ENCODE measurements at regions of chr2 and their contacts with region 1.

Region 1: GRCh38 chr2:68121873-68122679 is 35.6 kb upstream of the PNO1 start:
- DNase-seq: peak; percentile 54 to 70 (median 60)
- H3K4me3 ChIP-seq: no peak overlapping the region
- H3K4me3 Mint-ChIP-seq: peak overlapping the region in 2 of 8 donors; percentile 56 to 63
- H3K27ac ChIP-seq: no peak overlapping the region
- H3K27ac Mint-ChIP-seq: no peak overlapping the region
- H3K4me1 ChIP-seq: peaks cover 5% of the 10 kb centered on the region
- H3K4me1 Mint-ChIP-seq: peaks cover 1 to 5% (median 5%) of the 10 kb centered on the region in 4 donors
- H3K27me3 ChIP-seq: no peaks in the 10 kb centered on the region
- H3K27me3 Mint-ChIP-seq: peaks cover 0 to 1% of the 10 kb centered on the region in 2 donors

Region 2: DNA sequence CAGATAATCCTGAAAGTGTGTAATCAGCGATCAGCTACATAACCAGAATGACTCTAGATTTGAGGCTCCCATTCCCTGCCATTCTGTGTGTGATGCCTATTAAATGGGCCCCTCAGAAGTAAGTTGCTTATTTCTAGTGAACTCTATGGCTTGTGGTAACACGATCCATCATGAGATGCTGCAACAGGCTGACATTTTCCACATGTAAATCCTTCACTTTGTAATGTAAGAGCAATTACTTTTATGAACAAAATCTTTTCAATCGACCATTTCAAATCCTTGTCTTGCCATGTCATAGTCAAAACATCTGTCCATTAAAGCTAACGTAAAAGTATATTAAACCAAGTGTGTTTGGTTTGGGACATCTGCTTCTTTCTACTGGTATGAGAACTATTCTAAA is 900.8 kb before region 1 on chr2:
- CTCF ChIA-PET with region 1: no interaction called
- POLR2A ChIA-PET with region 1: no interaction called
- intact Hi-C with region 1: no loop called
- DNase-seq: no peak
- H3K4me3 ChIP-seq: no peak overlapping the region
- H3K4me3 Mint-ChIP-seq: no peak overlapping the region
- H3K27ac ChIP-seq: no peak overlapping the region
- H3K27ac Mint-ChIP-seq: no peak overlapping the region
- H3K4me1 ChIP-seq: no peaks in the 10 kb centered on the region
- H3K4me1 Mint-ChIP-seq: no peaks in the 10 kb centered on the region
- H3K27me3 ChIP-seq: no peaks in the 10 kb centered on the region
- H3K27me3 Mint-ChIP-seq: no peaks in the 10 kb centered on the region

Region 3: GRCh38 chr2:68100189-68100588 is 21.9 kb before region 1 on chr2:
- CTCF ChIA-PET with region 1: no interaction called
- POLR2A ChIA-PET with region 1: no interaction called
- intact Hi-C with region 1: no loop called
- DNase-seq: no peak
- H3K4me3 ChIP-seq: no peak overlapping the region
- H3K4me3 Mint-ChIP-seq: no peak overlapping the region
- H3K27ac ChIP-seq: no peak overlapping the region
- H3K27ac Mint-ChIP-seq: no peak overlapping the region
- H3K4me1 ChIP-seq: no peaks in the 10 kb centered on the region
- H3K4me1 Mint-ChIP-seq: peaks cover 0 to 1% (median 0%) of the 10 kb centered on the region in 4 donors
- H3K27me3 ChIP-seq: no peaks in the 10 kb centered on the region
- H3K27me3 Mint-ChIP-seq: peaks cover 2 to 6% of the 10 kb centered on the region in 2 donors

Region 4: GRCh38 chr2:68134120-68134519 is 12.0 kb after region 1 on chr2:
- CTCF ChIA-PET with region 1: interaction called, 19 read pairs
- POLR2A ChIA-PET with region 1: no interaction called
- intact Hi-C with region 1: no loop called
- DNase-seq: no peak
- H3K4me3 ChIP-seq: no peak overlapping the region
- H3K4me3 Mint-ChIP-seq: no peak overlapping the region
- H3K27ac ChIP-seq: no peak overlapping the region
- H3K27ac Mint-ChIP-seq: peak overlapping the region in 2 of 7 donors; percentile 4 to 23
- H3K4me1 ChIP-seq: no peaks in the 10 kb centered on the region
- H3K4me1 Mint-ChIP-seq: no peaks in the 10 kb centered on the region
- H3K27me3 ChIP-seq: no peaks in the 10 kb centered on the region
- H3K27me3 Mint-ChIP-seq: no peaks in the 10 kb centered on the region

Region 5: DNA sequence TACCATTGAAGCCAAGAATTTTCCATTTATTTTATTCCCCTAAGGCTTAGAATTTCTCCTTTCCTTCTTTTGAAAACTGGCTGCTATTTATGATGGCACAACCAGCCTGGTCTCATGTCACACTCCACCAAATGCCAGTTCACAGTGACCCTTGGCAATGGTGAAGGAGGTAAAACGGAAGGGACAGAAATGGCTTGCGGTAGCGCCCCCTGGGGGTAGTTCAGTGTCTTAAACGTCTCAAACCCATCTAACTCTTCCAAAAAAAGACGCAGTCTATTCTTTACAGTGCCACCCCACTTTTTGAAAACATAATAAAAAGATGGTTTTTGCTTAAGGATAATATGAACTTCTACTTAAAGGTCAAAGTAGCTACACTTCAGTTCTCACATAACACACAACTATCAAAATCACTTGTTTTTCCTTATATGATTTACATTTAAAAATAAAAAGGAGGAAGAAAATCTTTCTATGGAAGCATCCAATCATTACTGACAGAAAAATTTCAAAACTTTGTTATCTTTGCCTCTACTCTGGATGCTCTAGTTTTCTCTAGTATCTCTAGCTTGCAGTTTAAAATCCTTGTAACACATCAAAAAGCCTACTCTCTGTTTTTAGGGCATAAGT is 63.6 kb after region 1 on chr2:
- CTCF ChIA-PET with region 1: interaction called, 15 read pairs
- POLR2A ChIA-PET with region 1: no interaction called
- intact Hi-C with region 1: loop called (anchors 1 kb)
- DNase-seq: peak; percentile 42 to 59 (median 45)
- H3K4me3 ChIP-seq: no peak overlapping the region
- H3K4me3 Mint-ChIP-seq: no peak overlapping the region
- H3K27ac ChIP-seq: no peak overlapping the region
- H3K27ac Mint-ChIP-seq: peak overlapping the region in 6 of 7 donors; percentile 30 to 89 (median 54)
- H3K4me1 ChIP-seq: peaks cover 16% of the 10 kb centered on the region
- H3K4me1 Mint-ChIP-seq: peaks cover 18 to 35% (median 33%) of the 10 kb centered on the region in 4 donors
- H3K27me3 ChIP-seq: no peaks in the 10 kb centered on the region
- H3K27me3 Mint-ChIP-seq: no peaks in the 10 kb centered on the region

Region 6: DNA sequence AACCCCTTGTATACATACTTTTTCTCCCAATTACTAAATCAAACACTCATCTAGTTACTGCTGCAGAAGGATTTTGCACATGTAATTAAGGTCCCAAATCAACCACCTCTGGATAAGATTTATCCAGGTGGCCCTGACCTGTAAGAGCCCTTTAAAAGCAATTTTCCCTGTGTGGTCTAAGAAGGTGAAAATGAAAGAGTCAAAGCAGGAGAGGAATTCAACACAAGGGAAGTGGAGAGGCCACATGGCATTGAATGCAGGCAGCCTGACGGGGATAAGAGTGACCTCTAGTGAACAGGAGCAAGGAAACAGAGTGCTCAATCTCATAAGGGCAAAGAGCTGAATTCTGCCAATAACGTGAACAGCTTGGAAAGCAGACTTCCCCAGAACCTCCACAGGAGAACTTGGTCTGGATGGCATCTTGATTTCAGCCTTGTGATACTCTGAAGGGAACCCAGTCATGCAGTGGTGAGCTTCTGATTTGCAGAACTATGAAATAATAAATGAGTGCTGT is 103.1 kb after region 1 on chr2:
- CTCF ChIA-PET with region 1: interaction called, 8 read pairs
- POLR2A ChIA-PET with region 1: no interaction called
- intact Hi-C with region 1: loop called (anchors 1 kb)
- DNase-seq: peak in 4 of 5 donors; percentile 11 to 26 (median 18)
- H3K4me3 ChIP-seq: no peak overlapping the region
- H3K4me3 Mint-ChIP-seq: peak overlapping the region in 6 of 8 donors; percentile 0 to 82 (median 38)
- H3K27ac ChIP-seq: no peak overlapping the region
- H3K27ac Mint-ChIP-seq: peak overlapping the region; percentile 3 to 91 (median 19)
- H3K4me1 ChIP-seq: peaks cover 94% of the 10 kb centered on the region
- H3K4me1 Mint-ChIP-seq: peaks cover 71 to 99% (median 83%) of the 10 kb centered on the region in 4 donors
- H3K27me3 ChIP-seq: no peaks in the 10 kb centered on the region
- H3K27me3 Mint-ChIP-seq: no peaks in the 10 kb centered on the region

Region 7: DNA sequence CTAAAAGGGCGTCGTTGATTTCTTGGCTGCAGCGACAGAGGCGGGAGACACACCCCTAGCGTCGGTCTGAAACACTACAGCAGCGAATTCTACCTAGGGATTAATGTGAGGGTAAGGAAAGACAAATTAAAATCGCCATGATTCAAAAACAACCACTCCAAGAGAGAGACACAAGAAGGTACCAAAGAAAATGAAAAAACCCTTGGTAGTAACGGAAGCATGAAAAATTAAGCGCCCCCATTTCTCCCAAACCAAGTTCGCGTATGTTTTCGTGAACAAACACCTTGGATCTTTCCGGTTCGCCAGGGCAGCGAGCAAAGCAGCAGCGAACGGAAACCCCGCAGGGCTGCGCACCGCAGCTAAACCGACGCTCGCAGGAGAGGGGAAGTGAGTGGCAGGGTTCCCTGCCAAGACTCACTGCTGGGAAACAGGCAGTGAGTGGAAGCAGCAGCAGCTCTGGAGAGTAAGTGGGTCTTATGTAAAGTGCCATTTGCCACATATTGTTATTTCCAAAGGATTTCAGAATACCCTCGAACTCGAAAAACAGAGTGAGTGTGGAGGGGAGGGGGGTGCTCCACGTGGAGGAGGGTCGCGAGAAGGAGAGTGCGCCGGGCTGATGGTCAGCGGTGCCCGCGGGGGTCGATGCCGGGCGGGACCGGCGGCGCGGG is 129.2 kb after region 1 on chr2:
- CTCF ChIA-PET with region 1: interaction called, 5 read pairs
- POLR2A ChIA-PET with region 1: no interaction called
- intact Hi-C with region 1: loop called (anchors 1 kb)
- DNase-seq: peak; percentile 81 to 93 (median 86)
- H3K4me3 ChIP-seq: peak overlapping the region; percentile 66 to 83
- H3K4me3 Mint-ChIP-seq: peak overlapping the region in 7 of 8 donors; percentile 87 to 100 (median 94)
- H3K27ac ChIP-seq: peak overlapping the region; percentile 91
- H3K27ac Mint-ChIP-seq: peak overlapping the region in 6 of 7 donors; percentile 91 to 99 (median 97)
- H3K4me1 ChIP-seq: peaks cover 70% of the 10 kb centered on the region
- H3K4me1 Mint-ChIP-seq: peaks cover 20 to 59% (median 34%) of the 10 kb centered on the region in 4 donors
- H3K27me3 ChIP-seq: no peaks in the 10 kb centered on the region
- H3K27me3 Mint-ChIP-seq: peaks cover 0 to 4% of the 10 kb centered on the region in 2 donors

Region 8: DNA sequence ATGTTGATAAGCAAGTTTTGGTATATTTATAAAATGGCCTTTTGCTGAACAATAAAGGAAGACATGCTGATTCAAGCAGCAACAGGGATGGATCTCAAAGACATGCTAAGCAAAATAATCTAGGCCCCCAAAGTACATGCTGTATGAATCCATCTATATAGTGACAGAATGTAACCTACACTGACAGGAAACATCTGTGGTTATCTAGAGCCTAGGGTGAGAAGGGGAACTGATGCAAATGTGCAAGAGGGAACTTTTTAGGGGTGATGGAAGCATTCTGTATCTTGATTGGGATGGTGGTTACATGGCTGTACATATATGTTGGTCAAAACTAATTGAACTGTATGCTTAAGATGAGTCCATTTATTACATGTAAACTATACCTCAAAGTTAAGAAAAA is 173.4 kb after region 1 on chr2:
- CTCF ChIA-PET with region 1: interaction called, 65 read pairs
- POLR2A ChIA-PET with region 1: no interaction called
- intact Hi-C with region 1: no loop called
- DNase-seq: no peak
- H3K4me3 ChIP-seq: no peak overlapping the region
- H3K4me3 Mint-ChIP-seq: no peak overlapping the region
- H3K27ac ChIP-seq: no peak overlapping the region
- H3K27ac Mint-ChIP-seq: peak overlapping the region in 1 of 7 donors; percentile 49
- H3K4me1 ChIP-seq: no peaks in the 10 kb centered on the region
- H3K4me1 Mint-ChIP-seq: no peaks in the 10 kb centered on the region
- H3K27me3 ChIP-seq: no peaks in the 10 kb centered on the region
- H3K27me3 Mint-ChIP-seq: peaks cover 3 to 8% of the 10 kb centered on the region in 2 donors

Region 9: DNA sequence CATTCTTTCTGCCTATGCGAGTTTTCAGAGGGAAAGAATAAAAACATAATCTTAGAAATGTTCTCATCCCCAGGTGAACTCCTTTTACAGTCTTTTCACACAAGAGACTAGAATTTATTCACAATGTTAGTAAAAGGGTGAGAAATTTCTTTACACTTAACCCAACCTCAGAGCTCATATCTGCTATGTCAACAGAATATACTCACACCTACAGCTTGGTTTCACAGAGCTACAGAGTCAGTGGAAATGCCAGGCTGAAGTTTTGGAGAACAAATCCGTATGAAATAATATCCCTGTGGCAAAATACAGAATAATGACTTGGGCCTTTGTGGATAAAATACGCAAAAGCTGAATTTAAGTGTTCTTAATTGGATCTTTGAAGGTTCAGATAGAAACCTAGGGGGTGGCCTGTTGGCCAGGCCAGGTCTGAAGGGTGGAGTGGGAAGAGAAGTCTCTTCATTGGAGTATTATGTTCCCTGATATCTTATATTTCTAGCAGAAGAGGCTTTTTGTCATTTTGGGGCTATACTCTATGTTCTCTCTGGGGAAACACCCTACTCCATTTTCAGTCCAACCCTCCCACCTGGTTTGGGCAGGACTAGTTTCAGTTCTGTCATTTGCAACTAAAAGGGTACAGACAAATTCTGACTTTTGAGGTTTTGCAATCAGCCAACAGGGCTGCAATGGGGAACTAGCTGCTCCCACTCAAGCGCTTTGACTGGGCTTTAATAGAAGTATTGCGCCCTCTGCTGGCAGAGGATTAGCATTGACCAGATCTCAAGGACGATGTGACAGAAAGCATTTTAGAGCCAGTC is 319.3 kb after region 1 on chr2:
- CTCF ChIA-PET with region 1: interaction called, 20 read pairs
- POLR2A ChIA-PET with region 1: interaction called, 3 read pairs
- intact Hi-C with region 1: loop called (anchors 1 kb)
- DNase-seq: peak; percentile 78 to 87 (median 83)
- H3K4me3 ChIP-seq: no peak overlapping the region
- H3K4me3 Mint-ChIP-seq: peak overlapping the region in 5 of 8 donors; percentile 24 to 62 (median 37)
- H3K27ac ChIP-seq: peak overlapping the region; percentile 3
- H3K27ac Mint-ChIP-seq: peak overlapping the region; percentile 65 to 94 (median 89)
- H3K4me1 ChIP-seq: peaks cover 16% of the 10 kb centered on the region
- H3K4me1 Mint-ChIP-seq: peaks cover 8 to 24% (median 15%) of the 10 kb centered on the region in 4 donors
- H3K27me3 ChIP-seq: no peaks in the 10 kb centered on the region
- H3K27me3 Mint-ChIP-seq: no peaks in the 10 kb centered on the region